ENCODE measurements at regions of chr10 and their contacts with region 1.

Region 1: DNA sequence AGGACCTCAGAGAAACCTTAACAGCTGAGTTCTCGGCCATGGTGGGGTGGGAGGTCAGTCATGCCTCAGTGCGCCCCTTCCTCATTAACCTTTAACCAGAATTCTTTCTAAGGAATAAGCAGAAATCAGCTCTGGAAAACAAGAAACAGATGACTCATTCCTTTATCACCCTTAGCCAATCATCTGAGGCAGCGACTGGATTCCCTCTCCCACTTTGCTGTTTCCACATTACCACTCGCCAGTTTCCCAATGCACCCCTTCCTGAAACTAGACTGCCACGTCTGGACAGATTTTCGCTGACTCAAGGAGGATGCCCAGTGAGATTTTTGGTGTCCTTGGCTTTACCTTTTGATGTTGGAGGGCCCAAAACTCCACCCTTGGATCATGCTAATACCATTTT is 223.8 kb downstream of the PLXDC2 start:
- DNase-seq: peak; percentile 61

Region 2: DNA sequence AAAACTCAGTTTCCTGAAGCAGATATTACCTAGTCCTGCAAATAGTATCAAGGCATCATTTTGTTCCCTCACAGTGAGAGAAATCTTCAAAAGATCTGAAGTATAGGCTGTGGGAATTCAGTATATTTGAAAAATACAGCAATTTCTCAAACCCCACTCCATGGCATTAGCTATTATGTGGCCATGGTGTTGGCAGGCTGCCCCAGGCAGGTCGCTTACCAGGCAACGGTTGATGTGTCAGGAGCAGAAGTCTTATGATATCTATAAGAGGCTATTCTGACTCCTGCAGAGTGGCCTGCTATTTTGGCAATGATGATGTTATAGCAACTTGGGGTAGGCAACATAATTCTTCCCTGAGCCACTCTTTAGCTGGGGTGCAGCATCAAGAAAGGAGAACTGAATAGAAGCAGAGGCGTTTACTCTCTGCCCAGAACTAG is 35.9 kb before region 1 on chr10:
- intact Hi-C with region 1: no loop called
- DNase-seq: peak; percentile 86

Region 3: GRCh38 chr10:20029523-20029922 is 10.5 kb before region 1 on chr10:
- intact Hi-C with region 1: loop called in 1 of 2 experiments (anchors 2 kb)
- DNase-seq: no peak

Region 4: GRCh38 chr10:20059084-20059835 is 19.3 kb after region 1 on chr10:
- intact Hi-C with region 1: loop called in 1 of 2 experiments (anchors 1 kb)
- DNase-seq: no peak

Region 5: GRCh38 chr10:21525367-21526183 is 1485.6 kb after region 1 on chr10 and contains the start of gene SKIDA1:
- intact Hi-C with region 1: no loop called
- DNase-seq: peak; percentile 96
- total RNA-seq, gene SKIDA1: 0.33 to 1.2 TPM

Region 6: DNA sequence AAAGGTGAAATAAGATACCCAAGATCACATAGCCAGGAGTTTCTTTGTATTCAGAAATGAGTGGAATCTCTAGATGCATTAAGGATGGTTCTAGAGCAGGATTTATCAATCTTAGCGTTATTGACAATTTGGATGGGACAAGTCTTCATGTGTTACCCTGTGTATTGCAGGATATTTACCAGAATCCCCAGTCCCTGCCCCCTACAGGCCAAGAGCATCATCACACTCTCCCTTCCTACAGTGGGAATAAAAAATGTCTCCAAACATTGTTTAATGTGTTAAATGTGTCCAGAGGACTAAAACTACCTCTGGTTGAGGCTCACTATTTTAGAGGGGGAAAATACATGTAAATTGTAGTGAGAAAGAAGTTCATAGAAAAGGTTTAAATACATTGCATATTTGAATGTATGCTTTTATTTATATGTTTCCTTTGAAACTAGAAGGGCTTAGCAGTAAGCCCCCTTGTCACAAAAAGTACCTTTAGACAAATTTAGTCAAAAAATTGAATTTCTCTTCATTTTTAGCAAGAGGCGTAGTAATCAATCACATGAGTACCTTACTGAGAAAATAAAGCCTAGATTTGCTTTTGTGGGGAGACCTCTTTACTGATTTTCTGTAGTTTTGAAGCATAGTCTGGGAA is 1635.3 kb after region 1 on chr10:
- intact Hi-C with region 1: no loop called
- DNase-seq: no peak

Measured in posterior vena cava (tissue), 2 donors.